ENCODE measurements at regions of chr5 and their contacts with region 1.

Region 1: DNA sequence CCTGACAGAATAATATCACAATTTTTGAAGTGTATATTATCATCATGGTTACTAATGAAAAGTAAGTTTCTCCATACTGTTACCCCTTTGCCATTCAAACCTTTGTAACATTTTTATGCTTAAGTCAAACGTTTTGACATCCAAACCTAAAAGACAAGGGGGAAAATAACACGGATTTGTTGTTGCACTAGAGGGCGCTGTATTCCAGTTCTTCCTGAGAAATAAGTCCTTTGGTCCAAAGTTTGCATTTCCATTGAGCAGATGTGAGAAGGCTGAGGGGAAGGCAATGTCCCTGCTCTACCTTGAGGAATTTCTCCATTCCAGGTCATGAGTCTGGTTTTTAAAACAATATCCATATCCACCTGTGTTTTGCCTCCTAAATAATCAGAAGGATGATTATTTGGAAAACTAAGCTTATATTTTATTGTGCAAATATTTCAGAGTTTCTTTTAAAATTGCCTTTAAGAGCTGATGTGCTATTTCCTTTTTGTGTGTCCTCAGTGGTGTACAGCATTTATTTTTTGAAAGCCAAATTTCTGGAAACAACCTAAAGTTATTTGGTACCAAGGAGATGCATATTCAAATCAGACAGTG is 9.7 kb downstream of the LECT2 start:
- DNase-seq: peak; percentile 71
- ATAC-seq: peak; percentile 73
- H3K4me3 ChIP-seq: no peak overlapping the region
- H3K27ac ChIP-seq: no peak overlapping the region
- H3K4me1 ChIP-seq: no peaks in the 10 kb centered on the region
- H3K27me3 ChIP-seq: peaks cover 27% of the 10 kb centered on the region
- CTCF ChIP-seq: peak; percentile 64 to 90 (median 87)
- POLR2A ChIP-seq: no peak
- RAD21 ChIP-seq: peak; percentile 82

Region 2: DNA sequence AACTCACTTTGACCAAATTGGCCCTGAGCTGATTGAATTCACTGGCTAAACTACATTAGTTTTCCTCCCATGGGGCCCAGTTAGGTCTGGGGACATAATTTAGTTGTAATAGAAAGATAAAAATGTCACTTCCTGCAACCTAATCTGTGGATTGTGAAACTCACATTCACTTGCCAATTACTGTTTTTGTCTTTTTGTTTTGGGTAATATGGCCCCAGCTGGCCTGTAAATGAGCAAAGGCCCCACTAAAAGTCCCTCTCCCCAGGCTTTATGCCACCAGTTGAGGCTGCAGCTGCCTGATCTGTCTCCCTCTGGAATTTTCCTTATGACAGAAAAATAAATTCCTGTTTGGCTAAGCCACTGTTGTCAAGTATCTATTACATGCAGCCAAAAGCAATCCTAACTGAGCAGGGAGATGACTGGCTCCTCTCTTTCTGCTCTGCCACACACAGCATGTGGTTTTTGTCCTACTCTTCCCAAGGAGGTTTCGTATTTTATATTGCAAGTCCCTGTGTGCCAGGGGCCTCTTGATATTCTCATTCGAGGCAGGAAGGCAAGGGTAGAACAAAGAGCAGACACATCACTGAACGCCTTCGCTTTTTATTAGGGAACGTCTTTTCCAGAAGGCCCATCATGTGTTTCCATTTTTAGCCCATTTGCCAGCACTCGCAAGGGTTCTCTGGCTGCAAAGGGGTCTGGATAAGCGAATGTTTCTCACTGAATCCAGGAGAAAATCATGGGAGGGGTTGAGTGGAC is 134.7 kb before region 1 on chr5:
- CTCF ChIA-PET with region 1: no interaction called
- POLR2A ChIA-PET with region 1: no interaction called
- RAD21 ChIA-PET with region 1: no interaction called
- intact Hi-C with region 1: no loop called
- DNase-seq: no peak
- ATAC-seq: no peak
- H3K4me3 ChIP-seq: no peak overlapping the region
- H3K27ac ChIP-seq: no peak overlapping the region
- H3K4me1 ChIP-seq: no peaks in the 10 kb centered on the region
- H3K27me3 ChIP-seq: no peaks in the 10 kb centered on the region
- CTCF ChIP-seq: no peak
- POLR2A ChIP-seq: no peak
- RAD21 ChIP-seq: no peak

Region 3: DNA sequence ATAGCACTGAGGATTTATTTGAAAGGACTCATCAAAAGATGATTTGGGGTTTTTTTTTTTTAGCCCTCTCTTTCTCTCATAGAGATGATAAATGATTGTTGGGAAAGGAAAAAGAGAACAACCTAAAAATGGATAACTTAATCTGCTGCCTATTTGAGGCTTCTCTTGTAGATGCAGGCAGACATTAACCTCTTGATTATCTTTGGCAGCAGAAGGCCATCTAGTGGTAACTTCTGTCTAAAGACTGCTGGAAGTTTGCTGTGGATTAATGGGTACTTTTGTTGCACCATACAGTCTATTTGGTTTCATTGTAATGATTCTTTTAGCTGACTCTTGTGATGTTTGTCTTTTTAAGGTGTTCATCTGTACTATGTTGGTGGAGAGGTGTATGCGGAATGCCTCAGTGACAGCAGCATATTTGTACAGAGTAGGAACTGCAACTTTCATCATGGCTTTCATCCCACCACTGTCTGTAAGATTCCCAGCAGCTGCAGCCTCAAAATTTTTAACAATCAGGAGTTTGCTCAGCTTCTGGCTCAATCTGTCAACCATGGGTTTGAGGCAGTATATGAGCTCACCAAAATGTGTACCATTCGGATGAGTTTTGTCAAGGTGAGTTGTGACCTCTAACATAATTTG is 229.1 kb after region 1 on chr5:
- CTCF ChIA-PET with region 1: no interaction called
- POLR2A ChIA-PET with region 1: no interaction called
- RAD21 ChIA-PET with region 1: no interaction called
- intact Hi-C with region 1: loop called (anchors 1 kb)
- DNase-seq: peak; percentile 15
- ATAC-seq: peak; percentile 86
- H3K4me3 ChIP-seq: no peak overlapping the region
- H3K27ac ChIP-seq: no peak overlapping the region
- H3K4me1 ChIP-seq: no peaks in the 10 kb centered on the region
- H3K27me3 ChIP-seq: no peaks in the 10 kb centered on the region
- CTCF ChIP-seq: peak; percentile 54 to 71 (median 65); a peak in 5 of 6 replicates
- POLR2A ChIP-seq: no peak
- RAD21 ChIP-seq: peak; percentile 70

Region 4: DNA sequence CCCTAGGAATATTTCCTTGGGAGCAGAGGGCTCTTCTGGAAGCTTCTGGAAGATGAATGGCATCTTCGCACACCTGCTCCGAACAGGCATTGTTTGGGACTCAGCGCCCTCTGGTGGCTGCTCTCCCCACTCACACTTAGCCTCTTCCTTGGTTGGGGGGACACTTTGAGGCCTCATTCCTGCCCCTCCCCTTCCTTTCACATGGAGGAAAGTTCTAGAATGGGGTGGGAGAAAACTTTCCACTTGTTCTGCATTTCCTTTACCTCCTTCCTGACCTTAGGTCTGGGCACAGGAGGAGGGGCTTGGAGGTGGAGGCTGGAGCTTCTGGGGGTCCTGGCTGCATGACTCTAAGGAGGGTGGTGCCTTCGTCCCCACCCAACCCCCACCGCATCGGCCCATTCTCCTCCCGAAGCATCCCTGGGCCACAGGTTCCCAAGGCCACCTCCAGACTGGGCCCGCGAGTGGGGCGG is 267.2 kb after region 1 on chr5:
- CTCF ChIA-PET with region 1: no interaction called
- POLR2A ChIA-PET with region 1: no interaction called
- RAD21 ChIA-PET with region 1: interaction called in 1 of 2 experiments, 3 read pairs
- intact Hi-C with region 1: loop called (anchors 10 kb)
- DNase-seq: peak; percentile 24
- ATAC-seq: peak; percentile 83
- H3K4me3 ChIP-seq: no peak overlapping the region
- H3K27ac ChIP-seq: no peak overlapping the region
- H3K4me1 ChIP-seq: no peaks in the 10 kb centered on the region
- H3K27me3 ChIP-seq: no peaks in the 10 kb centered on the region
- CTCF ChIP-seq: peak; percentile 71 to 97 (median 92); a peak in 5 of 6 replicates
- POLR2A ChIP-seq: no peak
- RAD21 ChIP-seq: peak; percentile 87